ENCODE measurements at regions of chr10 and their contacts with region 1.

Region 1: DNA sequence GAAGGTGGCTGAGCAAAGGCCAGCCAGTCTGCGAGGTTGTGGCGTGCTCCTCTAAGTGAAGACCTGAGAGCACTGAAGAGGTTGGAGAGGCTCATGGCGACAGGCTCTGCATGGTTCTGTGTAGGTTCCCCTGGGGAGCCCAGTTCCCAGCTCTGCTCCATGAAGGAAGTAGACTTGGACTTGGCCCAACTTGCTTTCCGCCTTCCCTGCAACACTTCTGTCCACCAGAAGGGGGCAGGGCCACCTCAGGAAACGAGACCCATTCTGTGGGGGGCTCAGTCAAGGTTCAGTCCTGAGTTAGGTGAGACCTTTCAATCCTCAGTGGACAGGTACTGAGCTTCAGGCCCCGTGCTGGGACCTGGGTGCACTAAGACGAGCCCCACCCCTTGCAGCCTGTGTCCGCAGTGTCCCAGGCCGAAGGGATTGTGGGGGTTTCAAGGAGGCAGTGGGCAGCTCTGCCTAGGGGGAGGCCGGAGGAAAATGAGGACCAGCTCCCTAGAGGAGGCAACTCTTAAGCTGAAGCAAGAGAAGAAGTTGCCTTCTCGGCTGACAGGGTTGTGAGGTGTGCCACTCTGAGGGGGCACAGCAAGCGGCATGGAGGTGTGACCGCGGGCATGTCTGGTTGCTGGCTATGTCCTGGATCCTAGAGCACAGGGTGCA is 15.0 kb upstream of the PCBD1 start:
- DNase-seq: peak; percentile 50
- ATAC-seq: peak; percentile 51
- H3K4me3 Mint-ChIP-seq: no peak overlapping the region
- H3K27ac Mint-ChIP-seq: no peak overlapping the region
- H3K4me1 Mint-ChIP-seq: no peaks in the 10 kb centered on the region
- H3K27me3 Mint-ChIP-seq: no peaks in the 10 kb centered on the region
- CTCF ChIP-seq: peak; percentile 82

Region 2: GRCh38 chr10:70863470-70864160 is 39.8 kb before region 1 on chr10:
- CTCF ChIA-PET with region 1: no interaction called
- POLR2A ChIA-PET with region 1: no interaction called
- intact Hi-C with region 1: no loop called
- DNase-seq: no peak
- ATAC-seq: no peak
- H3K4me3 Mint-ChIP-seq: no peak overlapping the region
- H3K27ac Mint-ChIP-seq: peak overlapping the region; percentile 4
- H3K4me1 Mint-ChIP-seq: peaks cover 11% of the 10 kb centered on the region
- H3K27me3 Mint-ChIP-seq: no peaks in the 10 kb centered on the region
- CTCF ChIP-seq: no peak

Region 3: DNA sequence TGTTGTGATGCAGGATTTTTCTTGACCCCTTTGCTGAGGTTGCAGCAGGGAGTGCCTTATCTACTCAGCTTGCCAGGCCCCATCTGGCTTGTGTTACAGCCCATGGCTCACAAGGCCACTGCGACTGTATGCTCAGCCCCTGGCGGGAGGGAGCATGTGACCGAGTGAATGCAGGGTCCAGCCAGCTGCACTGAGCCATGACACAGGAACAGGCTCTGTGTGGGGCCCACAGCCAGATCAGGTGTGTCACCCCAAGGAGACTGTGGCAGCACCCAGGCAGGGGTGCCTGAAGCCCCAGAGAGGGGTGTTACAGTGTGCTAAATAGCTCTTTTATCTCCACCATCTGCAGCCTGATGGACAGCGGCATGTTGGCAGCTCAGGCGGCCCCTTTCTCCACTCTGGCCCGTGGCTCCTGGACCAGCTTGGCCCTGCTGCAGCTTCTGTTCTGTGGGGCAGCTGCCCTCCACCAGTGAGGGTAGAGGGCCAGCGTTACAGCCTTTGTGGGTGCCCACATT is 12.4 kb before region 1 on chr10:
- CTCF ChIA-PET with region 1: interaction called, 16 read pairs
- POLR2A ChIA-PET with region 1: no interaction called
- intact Hi-C with region 1: no loop called
- DNase-seq: no peak
- ATAC-seq: no peak
- H3K4me3 Mint-ChIP-seq: no peak overlapping the region
- H3K27ac Mint-ChIP-seq: no peak overlapping the region
- H3K4me1 Mint-ChIP-seq: peaks cover 18% of the 10 kb centered on the region
- H3K27me3 Mint-ChIP-seq: no peaks in the 10 kb centered on the region
- CTCF ChIP-seq: no peak

Region 4: DNA sequence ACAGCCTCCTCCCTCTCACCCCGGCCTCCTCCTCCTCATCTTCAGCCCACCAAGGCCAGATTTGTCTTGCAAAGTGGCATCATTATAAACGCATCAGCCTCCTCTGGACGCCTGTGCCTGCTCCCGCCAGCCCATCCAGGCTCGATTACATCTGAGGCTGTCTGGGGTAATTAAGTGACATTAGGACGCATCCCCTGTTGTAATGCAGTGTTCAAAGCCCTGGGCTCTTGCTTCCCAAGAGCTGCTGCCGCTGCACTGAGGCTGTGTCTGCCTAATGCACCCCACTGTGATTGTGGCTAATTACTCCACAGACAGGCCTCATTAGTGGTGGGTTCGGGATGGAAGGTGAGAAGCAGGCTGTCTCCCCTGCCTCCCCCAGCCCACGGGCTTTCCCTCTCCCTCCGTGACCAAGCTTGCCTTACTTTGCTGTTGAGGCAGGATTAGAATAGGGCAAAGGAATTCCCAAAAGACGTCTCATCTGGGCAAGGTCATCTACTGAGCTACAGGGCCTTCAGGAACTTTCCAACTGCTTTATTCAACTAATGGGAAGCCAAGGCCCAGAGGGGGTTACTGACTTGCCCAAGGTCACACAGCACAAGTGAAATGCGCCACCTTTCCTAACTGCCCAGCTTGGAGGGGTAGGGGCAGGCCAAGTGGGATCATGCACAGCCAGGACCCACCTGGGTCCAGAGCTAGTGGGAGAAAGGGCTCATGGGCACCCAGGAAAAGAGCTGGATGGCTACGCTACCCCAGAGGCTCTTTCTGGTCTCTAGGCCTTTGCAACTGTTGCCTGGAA is 51.2 kb after region 1 on chr10:
- CTCF ChIA-PET with region 1: no interaction called
- POLR2A ChIA-PET with region 1: no interaction called
- intact Hi-C with region 1: no loop called
- DNase-seq: no peak
- ATAC-seq: no peak
- H3K4me3 Mint-ChIP-seq: no peak overlapping the region
- H3K27ac Mint-ChIP-seq: no peak overlapping the region
- H3K4me1 Mint-ChIP-seq: no peaks in the 10 kb centered on the region
- H3K27me3 Mint-ChIP-seq: peaks cover 2% of the 10 kb centered on the region
- CTCF ChIP-seq: no peak

Region 5: GRCh38 chr10:71025535-71025934 is 122.1 kb after region 1 on chr10:
- CTCF ChIA-PET with region 1: no interaction called
- POLR2A ChIA-PET with region 1: no interaction called
- intact Hi-C with region 1: no loop called
- DNase-seq: no peak
- ATAC-seq: no peak
- H3K4me3 Mint-ChIP-seq: no peak overlapping the region
- H3K27ac Mint-ChIP-seq: no peak overlapping the region
- H3K4me1 Mint-ChIP-seq: no peaks in the 10 kb centered on the region
- H3K27me3 Mint-ChIP-seq: peaks cover 5% of the 10 kb centered on the region
- CTCF ChIP-seq: no peak

Region 6: DNA sequence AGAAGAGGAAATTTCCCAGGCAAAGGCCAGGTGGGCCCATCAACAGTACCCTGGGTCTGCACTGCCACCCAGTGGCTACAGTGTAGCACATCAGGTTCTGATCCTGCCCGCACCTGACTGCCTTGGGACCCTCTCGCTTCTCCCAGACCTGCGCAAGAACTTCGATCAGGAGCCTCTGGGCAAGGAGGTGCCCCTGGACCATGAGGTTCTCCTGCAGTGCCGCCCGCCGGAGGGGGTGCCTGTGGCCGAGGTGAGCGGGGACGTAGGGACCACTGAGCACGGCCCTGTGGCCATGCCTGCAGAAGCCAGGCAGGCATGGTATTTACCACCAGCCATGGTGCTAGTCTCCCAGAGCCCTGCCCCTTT is 381.8 kb after region 1 on chr10:
- CTCF ChIA-PET with region 1: interaction called, 5 read pairs
- POLR2A ChIA-PET with region 1: no interaction called
- intact Hi-C with region 1: loop called (anchors 5 kb)
- DNase-seq: peak; percentile 56
- ATAC-seq: peak; percentile 90
- H3K4me3 Mint-ChIP-seq: no peak overlapping the region
- H3K27ac Mint-ChIP-seq: no peak overlapping the region
- H3K4me1 Mint-ChIP-seq: no peaks in the 10 kb centered on the region
- H3K27me3 Mint-ChIP-seq: no peaks in the 10 kb centered on the region
- CTCF ChIP-seq: peak; percentile 72

Measured in activated CD8-positive, alpha-beta T cell treated with anti-CD3 and anti-CD28 coated beads for 36 hours (primary cell).